ENCODE measurements at regions of chr21 and their contacts with region 1.

Region 1: DNA sequence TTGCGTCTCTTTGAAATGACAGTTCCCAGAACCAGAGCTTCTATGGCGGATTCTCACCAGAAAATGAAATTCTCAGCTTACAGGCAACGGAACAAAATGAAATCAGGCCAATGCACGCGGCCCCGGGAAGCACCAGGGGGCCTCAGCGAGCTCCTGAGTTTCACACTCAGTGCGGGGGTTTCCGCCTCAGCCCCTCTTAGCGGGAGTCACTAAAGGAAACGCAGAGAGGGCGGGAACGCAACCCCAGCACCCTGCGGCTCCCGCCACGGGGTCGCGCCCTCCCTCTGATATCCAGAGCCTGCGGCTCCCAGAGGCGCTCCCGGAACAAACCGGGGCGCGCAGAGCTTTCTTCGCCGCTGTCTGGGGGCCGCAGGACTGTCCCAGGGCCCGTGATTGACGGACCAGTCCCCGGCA is 7.9 kb upstream of the COL6A1 start:
- DNase-seq: no peak
- ATAC-seq: peak; percentile 74
- H3K4me3 ChIP-seq: peak overlapping the region; percentile 34 to 50
- H3K27ac ChIP-seq: 0 out of 2 replicates have a peak overlapping the region, but pooled peaks have one; percentile 29
- H3K4me1 ChIP-seq: peaks cover 3% of the 10 kb centered on the region; the same call in 1 of the 2 replicates
- H3K27me3 ChIP-seq: no peaks in the 10 kb centered on the region
- CTCF ChIP-seq: peak; percentile 78

Region 2: DNA sequence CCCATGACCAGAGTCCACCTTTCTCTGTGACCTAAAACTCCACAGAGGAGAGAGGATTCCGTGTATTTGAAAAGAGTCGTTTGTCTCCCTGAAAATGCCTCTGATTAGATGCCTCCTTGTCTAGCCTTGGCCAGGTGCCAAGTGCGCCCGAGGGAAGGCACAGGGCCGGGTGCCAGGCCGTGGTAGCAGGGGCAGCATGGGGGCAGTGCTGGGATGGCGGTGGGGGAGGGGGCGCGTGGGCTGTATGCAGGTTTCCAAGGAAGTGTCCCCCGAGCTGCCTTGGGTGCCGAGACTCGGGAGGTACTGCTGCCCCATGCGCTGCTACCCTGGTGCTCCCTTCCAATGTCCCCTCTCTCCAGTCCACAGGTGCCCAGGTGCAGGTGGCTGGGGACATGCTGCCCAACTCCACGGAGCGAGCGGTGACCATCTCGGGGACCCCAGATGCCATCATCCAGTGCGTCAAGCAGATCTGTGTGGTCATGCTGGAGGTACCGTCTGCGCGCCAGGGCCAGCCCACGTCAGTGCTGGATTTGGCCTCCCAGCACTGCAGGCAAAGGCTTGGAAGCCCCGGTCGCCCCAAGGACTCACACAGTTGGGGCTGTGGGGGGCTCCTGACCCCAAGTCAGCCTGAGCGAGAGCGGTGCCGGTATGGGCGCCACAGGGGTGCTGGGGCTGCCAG is 63.0 kb before region 1 on chr21:
- CTCF ChIA-PET with region 1: no interaction called
- POLR2A ChIA-PET with region 1: no interaction called
- in situ Hi-C with region 1: no loop called
- intact Hi-C with region 1: no loop called
- DNase-seq: no peak
- ATAC-seq: no peak
- H3K4me3 ChIP-seq: no peak overlapping the region
- H3K27ac ChIP-seq: no peak overlapping the region
- H3K4me1 ChIP-seq: no peaks in the 10 kb centered on the region
- H3K27me3 ChIP-seq: no peaks in the 10 kb centered on the region
- CTCF ChIP-seq: no peak

Region 3: GRCh38 chr21:45929449-45929848 is 44.2 kb before region 1 on chr21:
- CTCF ChIA-PET with region 1: interaction called, 12 read pairs
- POLR2A ChIA-PET with region 1: no interaction called
- in situ Hi-C with region 1: no loop called
- intact Hi-C with region 1: no loop called
- DNase-seq: no peak
- ATAC-seq: no peak
- H3K4me3 ChIP-seq: no peak overlapping the region
- H3K27ac ChIP-seq: no peak overlapping the region
- H3K4me1 ChIP-seq: no peaks in the 10 kb centered on the region
- H3K27me3 ChIP-seq: no peaks in the 10 kb centered on the region
- CTCF ChIP-seq: no peak

Region 4: DNA sequence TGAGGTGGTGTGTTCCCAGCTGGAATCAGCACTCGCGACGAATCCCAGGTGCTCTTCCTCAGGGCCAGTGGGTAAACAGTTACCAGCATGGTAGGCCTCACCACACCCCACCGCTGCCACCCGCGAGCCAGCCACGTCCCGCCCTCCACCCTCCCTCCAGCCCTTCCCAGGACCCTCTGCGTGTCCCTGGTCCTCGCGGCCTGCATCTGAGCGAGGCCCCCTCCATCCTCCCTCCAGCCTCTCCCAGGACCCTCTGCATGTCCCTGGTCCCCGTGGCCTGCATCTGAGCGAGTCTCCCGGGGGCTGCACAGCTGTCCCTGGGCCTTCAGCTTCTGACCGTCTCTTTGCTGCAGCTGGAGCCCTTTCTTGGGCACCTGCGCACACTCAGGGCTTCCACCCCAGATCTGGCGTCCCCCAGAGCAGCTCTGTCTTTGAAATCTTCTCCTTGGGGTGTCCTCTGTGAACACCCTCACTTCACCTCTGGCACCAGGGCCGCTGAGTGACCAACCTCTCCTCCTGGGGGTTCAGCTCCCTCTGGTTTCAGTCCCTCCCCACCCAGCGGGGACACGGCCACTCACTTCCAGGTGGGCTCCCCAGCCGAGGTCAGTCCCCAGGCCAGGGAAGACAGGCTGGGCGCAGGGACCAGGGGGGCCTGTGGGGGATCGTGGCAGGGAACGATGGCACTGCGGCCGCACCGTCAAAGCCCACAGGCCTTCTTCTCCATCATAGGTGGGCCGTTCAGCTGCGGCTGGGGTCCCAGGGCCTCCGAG is 66.4 kb after region 1 on chr21:
- CTCF ChIA-PET with region 1: interaction called, 17 read pairs
- POLR2A ChIA-PET with region 1: no interaction called
- in situ Hi-C with region 1: no loop called
- intact Hi-C with region 1: no loop called
- DNase-seq: no peak
- ATAC-seq: no peak
- H3K4me3 ChIP-seq: no peak overlapping the region
- H3K27ac ChIP-seq: no peak overlapping the region
- H3K4me1 ChIP-seq: no peaks in the 10 kb centered on the region
- H3K27me3 ChIP-seq: no peaks in the 10 kb centered on the region
- CTCF ChIP-seq: no peak

Region 5: DNA sequence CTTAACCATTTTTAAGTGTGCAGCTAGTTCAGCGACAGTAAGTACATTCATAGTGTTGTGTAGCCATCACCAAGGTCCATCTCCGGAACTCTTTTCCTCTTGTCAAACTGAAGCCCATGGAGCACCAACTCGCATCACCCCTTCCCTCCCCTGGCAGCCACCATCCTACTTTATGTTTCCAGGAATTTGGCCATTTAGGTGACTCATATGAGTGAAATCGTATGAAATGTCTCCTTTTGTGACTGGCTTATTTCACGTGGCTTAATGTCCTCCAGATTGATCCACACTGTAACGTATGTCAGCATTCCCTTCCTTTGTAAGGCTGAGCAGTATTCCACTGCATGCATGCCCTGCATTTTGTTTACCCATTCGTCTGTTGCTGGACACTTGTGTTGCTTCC is 126.8 kb after region 1 on chr21:
- CTCF ChIA-PET with region 1: no interaction called
- POLR2A ChIA-PET with region 1: no interaction called
- in situ Hi-C with region 1: no loop called
- intact Hi-C with region 1: loop called (anchors 5 kb)
- DNase-seq: no peak
- ATAC-seq: no peak
- H3K4me3 ChIP-seq: no peak overlapping the region
- H3K27ac ChIP-seq: no peak overlapping the region
- H3K4me1 ChIP-seq: no peaks in the 10 kb centered on the region
- H3K27me3 ChIP-seq: no peaks in the 10 kb centered on the region
- CTCF ChIP-seq: no peak

Region 6: DNA sequence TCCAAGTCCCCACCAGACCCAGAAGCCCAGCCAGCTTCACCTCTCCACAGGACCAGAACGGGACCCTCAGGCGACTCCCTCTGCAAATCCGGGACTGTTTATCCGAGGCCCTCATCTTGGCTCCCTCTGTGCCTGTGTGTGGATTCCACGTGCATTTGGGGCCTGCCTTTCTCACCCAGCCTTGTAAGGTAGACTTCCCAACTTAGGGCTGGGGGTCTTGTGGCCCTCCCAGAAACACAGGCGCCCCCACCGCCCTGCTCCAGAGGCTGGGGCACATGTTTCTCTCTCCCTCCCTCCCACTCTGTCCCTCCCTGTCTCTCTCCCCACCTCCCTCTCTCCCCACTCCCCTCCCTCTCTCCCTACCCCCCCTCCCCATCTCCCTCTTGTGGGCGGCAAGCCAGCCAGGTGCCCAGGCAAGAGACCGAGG is 169.3 kb after region 1 on chr21:
- CTCF ChIA-PET with region 1: interaction called, 6 read pairs
- POLR2A ChIA-PET with region 1: interaction called, 12 read pairs
- in situ Hi-C with region 1: no loop called
- intact Hi-C with region 1: no loop called
- DNase-seq: no peak
- ATAC-seq: no peak
- H3K4me3 ChIP-seq: no peak overlapping the region
- H3K27ac ChIP-seq: no peak overlapping the region
- H3K4me1 ChIP-seq: no peaks in the 10 kb centered on the region
- H3K27me3 ChIP-seq: no peaks in the 10 kb centered on the region
- CTCF ChIP-seq: no peak

Region 7: DNA sequence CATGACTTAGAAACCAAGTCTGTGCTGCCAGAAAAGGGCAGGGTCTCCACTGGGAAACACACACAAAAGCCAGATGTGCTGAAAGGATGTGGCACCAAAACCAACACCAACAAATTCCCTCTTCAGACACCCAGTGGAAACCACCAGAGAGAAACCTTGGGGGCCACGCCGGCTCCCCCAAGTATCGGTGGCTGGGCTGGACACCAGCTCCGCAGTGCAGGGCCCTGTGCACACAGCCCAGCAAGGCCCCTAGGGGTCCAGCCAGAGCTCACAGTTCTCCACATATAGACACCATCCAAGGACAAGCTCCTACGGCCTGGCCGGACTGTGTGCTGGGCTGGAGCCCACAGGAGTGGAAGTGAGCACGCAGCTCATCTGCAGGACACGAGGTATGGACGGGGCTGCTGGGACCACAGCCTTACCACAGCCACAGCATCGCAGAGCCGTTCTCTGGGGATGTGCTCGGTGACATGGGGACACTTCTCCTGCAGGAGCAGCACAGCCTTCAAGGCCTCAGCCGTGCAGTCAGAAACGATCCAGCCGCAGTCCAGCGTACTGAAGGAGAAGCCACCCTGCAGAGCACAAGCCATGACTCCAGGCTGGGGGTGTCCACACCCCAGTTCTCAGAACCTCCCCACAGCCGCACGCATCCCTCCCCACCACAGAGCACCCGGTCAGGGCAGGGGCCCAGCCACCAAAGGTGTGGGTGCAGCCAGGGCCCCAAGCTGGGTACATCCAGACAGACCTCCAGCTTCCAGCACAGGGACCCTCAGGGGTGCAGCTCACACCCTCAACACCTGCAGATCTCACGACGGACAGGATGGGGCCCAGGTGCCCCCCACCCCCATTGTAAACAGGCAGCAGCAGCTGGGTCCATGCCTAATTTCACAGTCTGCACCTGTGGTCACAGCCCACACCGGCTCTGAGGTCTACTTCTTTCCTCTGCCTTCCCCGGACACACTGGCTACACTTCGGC is 233.6 kb after region 1 on chr21:
- CTCF ChIA-PET with region 1: no interaction called
- POLR2A ChIA-PET with region 1: no interaction called
- in situ Hi-C with region 1: no loop called
- intact Hi-C with region 1: no loop called
- DNase-seq: no peak
- ATAC-seq: no peak
- H3K4me3 ChIP-seq: no peak overlapping the region
- H3K27ac ChIP-seq: no peak overlapping the region
- H3K4me1 ChIP-seq: no peaks in the 10 kb centered on the region
- H3K27me3 ChIP-seq: no peaks in the 10 kb centered on the region
- CTCF ChIP-seq: no peak

Measured in Panc1 (cell line).